ENCODE measurements at regions of chr19 and their contacts with region 1.

Region 1: GRCh38 chr19:45469132-45469944 is 1.5 kb downstream of the FOSB start:
- DNase-seq: no peak
- H3K4me3 ChIP-seq: peak overlapping the region; percentile 95
- CTCF ChIP-seq: peak; percentile 0

Region 2: DNA sequence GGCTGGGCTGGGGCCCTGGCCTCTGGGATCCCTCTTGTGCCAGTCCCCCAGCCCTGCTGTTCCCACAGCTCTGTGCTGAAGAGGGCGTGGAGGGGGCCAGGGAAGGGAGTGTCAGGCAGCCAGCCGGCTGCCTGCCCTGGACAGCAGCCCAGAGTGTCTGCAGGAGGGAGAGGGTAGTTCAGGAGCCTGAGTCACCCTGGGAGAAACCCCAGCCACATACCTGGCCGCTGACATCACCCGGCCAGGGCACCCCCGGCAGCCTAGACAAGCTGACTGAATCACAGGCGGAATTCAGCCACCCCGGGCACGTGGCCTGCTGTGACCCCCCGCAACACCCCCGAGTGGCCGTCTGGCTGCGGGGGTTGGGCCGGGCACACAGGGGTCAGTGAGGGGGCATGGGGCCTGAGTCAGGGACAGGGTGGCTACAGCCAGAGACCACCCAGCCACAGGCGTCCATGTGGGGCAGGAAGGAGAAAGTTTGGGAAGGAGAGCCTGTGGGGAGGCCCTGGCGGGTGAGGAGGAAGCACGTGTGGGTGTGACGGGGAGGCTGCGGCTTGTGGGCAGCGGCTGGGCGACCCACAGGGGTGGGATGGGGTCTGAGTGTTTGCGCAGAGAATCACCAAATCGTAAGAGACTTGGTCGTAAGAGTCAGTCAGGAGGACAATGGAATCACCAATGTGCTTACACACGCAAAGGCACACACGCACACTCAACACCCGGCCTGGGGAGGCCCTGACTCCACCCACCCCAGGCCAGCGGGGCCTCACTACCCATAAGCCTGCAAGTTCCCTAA is 13.4 kb before region 1 on chr19:
- CTCF ChIA-PET with region 1: interaction called, 12 read pairs
- POLR2A ChIA-PET with region 1: interaction called, 37 read pairs
- DNase-seq: peak; percentile 98
- H3K4me3 ChIP-seq: peak overlapping the region; percentile 42
- CTCF ChIP-seq: no peak

Region 3: DNA sequence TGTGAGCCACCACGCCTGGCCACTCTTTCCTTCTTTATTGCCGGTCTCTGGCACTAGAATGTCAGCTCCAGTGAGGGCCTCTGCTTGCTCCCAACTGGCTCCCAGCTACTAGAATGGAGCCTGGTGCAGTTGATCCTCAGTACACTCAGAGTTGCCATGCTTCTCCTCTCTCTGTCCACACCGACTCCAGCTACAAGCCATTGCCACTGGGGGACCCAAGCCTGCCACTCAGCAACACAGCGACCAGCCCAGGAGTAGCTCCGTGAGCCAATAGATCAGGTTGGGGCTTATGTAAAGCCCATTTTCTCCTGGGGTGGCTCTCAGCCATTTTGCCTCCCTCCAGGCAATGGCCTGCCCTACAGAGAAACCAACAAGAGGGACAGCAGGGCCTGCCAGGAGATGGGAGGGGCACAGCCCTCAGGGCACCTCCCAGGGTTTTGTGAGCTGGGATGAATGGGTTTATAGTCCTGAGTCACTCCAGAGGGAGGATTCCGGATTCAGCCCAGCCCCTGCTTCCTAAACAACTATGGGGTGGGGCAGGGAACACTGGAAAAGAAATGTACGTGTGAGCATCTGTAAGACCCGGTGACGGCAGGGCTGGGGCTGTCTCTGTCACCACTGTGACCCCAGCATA is 78.8 kb after region 1 on chr19:
- CTCF ChIA-PET with region 1: no interaction called
- POLR2A ChIA-PET with region 1: no interaction called
- DNase-seq: no peak
- H3K4me3 ChIP-seq: no peak overlapping the region
- CTCF ChIP-seq: no peak